ENCODE measurements at regions of chr9 and their contacts with region 1.

Region 1: DNA sequence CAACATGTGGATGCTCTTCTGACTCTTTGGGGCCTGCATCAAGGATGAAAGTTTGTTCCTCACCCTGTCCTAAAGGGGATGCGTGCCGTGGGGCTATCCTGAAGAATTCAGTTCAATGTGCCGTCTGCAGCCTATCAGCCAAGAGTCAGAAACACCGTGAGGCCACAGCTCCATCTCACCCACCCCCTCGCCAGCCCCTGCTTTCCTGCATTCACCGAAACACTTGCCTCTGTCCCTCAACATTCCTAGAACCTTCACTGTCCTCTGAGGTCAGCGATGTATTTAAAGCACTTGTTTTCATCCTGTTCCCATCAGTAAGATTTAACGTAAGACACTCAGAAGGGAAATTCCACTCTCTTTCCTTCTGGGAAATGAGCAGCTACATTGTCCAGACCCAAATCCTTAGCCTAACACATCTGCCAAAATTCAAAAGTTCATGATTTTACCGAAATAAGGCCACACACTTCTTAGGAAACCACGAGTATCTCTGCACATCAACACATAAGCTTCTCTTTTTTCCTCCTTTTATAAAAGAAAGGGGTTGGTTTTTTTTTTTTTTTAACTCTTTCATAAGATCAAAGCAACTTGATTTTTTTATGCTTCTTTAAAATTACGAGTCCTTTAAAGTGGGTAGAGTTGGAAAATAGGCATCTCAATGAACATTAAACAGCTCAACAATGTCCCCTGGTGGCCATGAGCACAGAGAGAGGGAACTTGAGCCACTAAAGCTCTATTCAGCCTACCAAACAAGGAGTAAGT is 100.7 kb downstream of the SUSD1 start:
- DNase-seq: peak; percentile 91
- H3K4me3 ChIP-seq: no peak overlapping the region
- H3K27me3 ChIP-seq: no peaks in the 10 kb centered on the region
- CTCF ChIP-seq: peak; percentile 89

Region 2: GRCh38 chr9:111759762-111760639 is 314.4 kb before region 1 on chr9:
- CTCF ChIA-PET with region 1: interaction called, 57 read pairs
- POLR2A ChIA-PET with region 1: no interaction called
- DNase-seq: peak; percentile 63
- H3K4me3 ChIP-seq: no peak overlapping the region
- H3K27me3 ChIP-seq: no peaks in the 10 kb centered on the region
- CTCF ChIP-seq: peak; percentile 59

Region 3: GRCh38 chr9:111945216-111945615 is 129.2 kb before region 1 on chr9:
- CTCF ChIA-PET with region 1: interaction called, 7 read pairs
- POLR2A ChIA-PET with region 1: interaction called, 11 read pairs
- DNase-seq: no peak
- H3K4me3 ChIP-seq: no peak overlapping the region
- H3K27me3 ChIP-seq: no peaks in the 10 kb centered on the region
- CTCF ChIP-seq: no peak

Region 4: GRCh38 chr9:112029921-112030444 is 44.4 kb before region 1 on chr9:
- CTCF ChIA-PET with region 1: interaction called, 12 read pairs
- POLR2A ChIA-PET with region 1: interaction called, 5 read pairs
- DNase-seq: peak; percentile 51
- H3K4me3 ChIP-seq: no peak overlapping the region
- H3K27me3 ChIP-seq: no peaks in the 10 kb centered on the region
- CTCF ChIP-seq: no peak

Region 5: GRCh38 chr9:112041536-112042243 is 32.7 kb before region 1 on chr9:
- CTCF ChIA-PET with region 1: interaction called, 12 read pairs
- POLR2A ChIA-PET with region 1: interaction called, 5 read pairs
- DNase-seq: peak; percentile 100
- H3K4me3 ChIP-seq: no peak overlapping the region
- H3K27me3 ChIP-seq: no peaks in the 10 kb centered on the region
- CTCF ChIP-seq: no peak

Region 6: GRCh38 chr9:112050544-112051475 is 23.6 kb before region 1 on chr9:
- CTCF ChIA-PET with region 1: interaction called, 9 read pairs
- POLR2A ChIA-PET with region 1: interaction called, 35 read pairs
- DNase-seq: peak; percentile 93
- H3K4me3 ChIP-seq: no peak overlapping the region
- H3K27me3 ChIP-seq: no peaks in the 10 kb centered on the region
- CTCF ChIP-seq: no peak

Region 7: DNA sequence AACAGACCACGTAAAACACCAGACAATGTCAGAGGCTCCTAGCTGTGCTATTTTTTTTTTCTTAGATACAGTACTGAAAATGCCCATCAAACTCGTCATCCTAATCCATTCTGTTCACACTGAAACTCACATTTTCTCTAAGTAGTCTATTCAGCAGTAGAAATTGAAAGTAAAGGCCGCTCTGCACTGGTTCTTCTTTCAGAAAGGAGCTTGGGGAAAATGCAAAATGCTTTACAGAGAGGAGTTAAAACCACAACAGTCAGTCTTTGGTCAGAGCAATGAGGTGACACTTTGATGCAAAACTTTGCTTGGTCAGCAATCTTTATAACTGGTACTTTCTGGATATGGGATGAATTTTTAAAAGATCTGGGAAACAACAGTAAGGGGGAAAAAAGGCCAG is 144.5 kb after region 1 on chr9:
- CTCF ChIA-PET with region 1: no interaction called
- POLR2A ChIA-PET with region 1: no interaction called
- DNase-seq: no peak
- H3K4me3 ChIP-seq: no peak overlapping the region
- H3K27me3 ChIP-seq: no peaks in the 10 kb centered on the region
- CTCF ChIP-seq: no peak

Region 8: DNA sequence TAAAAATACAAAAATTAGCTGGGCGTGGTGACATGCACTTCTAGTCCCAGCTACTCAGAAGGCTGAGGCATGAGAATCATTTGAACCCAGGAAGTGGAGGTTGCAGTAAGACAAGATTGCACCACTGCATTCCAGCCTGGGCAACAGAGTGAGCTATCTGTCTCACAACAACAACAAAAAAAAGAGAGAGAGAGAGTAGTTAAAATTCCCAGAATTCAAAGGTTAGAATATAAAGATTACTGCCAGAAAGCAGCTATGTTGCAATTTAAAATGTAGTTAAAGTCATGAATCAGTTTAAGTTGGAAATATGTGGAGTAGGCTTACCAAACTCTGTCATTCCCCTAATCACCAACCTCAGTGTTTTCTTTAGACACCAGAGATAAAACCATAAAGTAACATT is 159.3 kb after region 1 on chr9:
- CTCF ChIA-PET with region 1: no interaction called
- POLR2A ChIA-PET with region 1: no interaction called
- DNase-seq: peak; percentile 79
- H3K4me3 ChIP-seq: no peak overlapping the region
- H3K27me3 ChIP-seq: no peaks in the 10 kb centered on the region
- CTCF ChIP-seq: no peak

Region 9: DNA sequence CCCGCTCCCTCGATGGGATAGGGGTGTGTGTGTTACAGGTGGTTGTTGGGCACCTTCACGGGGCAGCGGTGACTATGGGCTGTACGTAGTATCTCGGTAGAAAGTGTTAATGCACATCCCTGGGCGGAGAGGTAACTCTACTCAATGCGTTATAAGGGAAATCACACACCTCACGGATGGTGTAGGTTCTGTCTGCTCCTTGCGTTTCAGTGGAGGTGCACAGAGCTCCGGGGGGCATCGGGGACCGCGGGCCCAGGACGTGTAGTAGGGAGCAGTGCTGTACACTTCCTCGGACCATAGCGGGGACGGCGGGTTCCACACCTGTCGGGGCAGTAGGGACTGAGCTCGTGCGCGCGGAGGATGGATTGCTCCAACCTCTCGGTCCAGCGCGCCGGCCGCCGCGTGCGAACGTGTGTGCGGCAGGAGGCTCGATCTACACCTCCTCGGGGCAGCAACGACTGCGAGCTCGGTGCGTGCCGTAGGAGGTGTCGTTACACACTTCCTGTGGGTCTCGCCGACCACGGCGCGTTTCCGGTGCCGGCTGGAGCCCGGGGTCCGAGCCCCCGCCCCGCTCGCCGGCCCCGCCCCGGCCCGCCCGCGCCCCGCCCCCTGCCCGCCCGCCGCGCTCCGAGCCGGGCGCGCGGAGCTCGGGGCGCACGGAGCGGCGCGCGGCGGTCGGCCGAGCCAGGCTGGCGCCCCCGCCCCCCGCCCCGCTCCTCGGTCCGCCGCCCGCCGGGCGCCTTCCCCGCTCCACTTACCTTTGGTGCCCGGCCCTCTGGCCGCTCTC is 412.0 kb after region 1 on chr9 and contains the start of gene KIAA1958:
- CTCF ChIA-PET with region 1: no interaction called
- POLR2A ChIA-PET with region 1: no interaction called
- DNase-seq: no peak
- H3K4me3 ChIP-seq: peak within 1 kb of the TSS; percentile 93
- H3K27me3 ChIP-seq: no peaks in the 10 kb centered on the region
- CTCF ChIP-seq: no peak
- polyA plus RNA-seq, gene KIAA1958: 1.7 and 2.2 TPM in 2 replicates